ENCODE measurements at regions of chr9 and their contacts with region 1.

Region 1: DNA sequence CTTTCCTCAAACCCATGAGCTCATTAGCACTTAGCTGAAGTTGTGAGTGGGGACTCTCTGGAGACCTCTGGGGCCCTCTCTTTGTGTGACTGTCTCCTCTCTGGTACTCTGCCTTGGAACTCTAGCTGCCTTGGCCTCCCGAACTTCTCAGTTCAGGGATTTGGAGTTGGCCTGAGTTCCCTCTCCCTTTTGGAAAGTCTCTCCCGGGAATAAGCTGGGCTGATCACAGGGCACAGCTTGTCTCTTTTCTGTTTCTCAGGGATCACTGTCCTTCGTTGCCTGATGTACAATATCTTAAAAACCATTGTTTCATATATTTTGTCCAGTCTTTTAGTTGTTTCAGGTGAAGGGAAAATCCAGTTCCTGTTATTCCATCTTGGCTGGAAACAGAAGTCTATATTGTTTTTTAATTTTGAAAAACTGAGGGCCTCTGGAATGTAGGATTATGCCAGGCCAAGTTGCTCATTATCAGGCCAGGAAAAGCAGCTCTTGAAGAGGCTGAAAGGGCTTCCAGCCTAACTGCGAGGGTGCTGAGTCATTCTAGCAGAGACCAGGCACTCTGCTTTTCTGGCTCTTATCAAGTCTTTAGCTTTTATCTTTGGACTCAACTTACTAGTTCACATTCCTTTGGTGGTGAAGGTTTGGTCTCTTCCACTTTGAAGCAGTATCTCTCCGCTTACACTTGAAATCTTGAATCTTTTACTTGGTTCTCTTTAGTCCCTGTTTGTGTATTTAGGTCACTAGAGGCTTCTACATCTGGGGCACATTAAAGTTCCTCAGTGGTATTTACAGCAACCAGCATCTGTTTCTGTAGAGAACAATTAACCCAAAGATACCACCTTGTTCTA is 8.4 kb upstream of the RGS3 start:
- ATAC-seq: peak in 7 of 8 experiments; percentile 47 to 95 (median 63)
- H3K4me3 ChIP-seq: no peak overlapping the region
- H3K27ac ChIP-seq: no peak overlapping the region
- H3K4me1 ChIP-seq: peaks cover 4 to 7% of the 10 kb centered on the region in 2 donors

Region 2: DNA sequence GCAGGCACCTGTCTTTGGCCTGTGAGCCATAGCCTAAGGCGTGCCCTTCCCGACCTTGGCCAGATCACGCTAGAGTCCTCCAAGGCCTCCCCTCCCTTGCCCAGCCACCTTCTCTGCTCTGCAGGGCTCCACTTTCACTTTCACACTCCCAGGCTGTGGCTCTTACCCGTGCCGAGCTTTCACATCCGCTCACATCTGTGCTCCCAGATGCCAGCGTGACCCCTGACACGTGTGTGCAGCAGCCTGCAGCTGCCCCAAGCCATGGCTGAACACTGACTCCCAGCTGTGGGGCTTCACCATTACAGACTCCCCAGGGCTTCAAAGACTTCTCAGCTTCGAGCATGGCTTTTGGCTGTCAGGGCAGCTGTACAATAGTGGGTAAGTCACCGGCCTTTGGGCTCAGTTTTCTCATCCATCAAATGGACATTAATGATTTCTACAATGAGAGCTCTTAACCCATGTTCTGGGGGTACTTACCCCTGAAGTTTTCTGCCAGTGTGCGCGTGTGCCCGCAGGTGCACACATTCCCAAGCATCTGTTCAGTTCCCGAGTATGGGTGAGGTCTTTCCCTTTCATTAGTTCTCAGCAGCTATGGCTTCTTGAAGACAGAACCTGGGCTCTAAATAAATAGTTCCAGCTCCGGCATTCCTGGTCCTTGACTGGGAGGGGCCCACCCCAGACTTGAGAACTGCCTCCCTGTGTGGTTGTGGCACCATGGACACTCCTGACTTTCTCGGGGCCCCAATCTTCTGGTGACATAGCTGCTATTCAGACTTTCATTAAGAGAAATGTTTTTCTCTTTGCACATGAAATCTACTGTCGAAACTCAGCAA is 126.9 kb after region 1 on chr9:
- in situ Hi-C with region 1: loop called in 3 of 9 experiments (anchors 10 to 25 kb)
- ATAC-seq: peak; percentile 27 to 66 (median 44)
- H3K4me3 ChIP-seq: no peak overlapping the region
- H3K27ac ChIP-seq: peak overlapping the region in 1 of 2 donors; percentile 11
- H3K4me1 ChIP-seq: peaks cover 0 to 11% of the 10 kb centered on the region in 2 donors

Measured in motor neuron (in vitro differentiated cells).